ENCODE measurements at regions of chr20 and their contacts with region 1.

Region 1: GRCh38 chr20:10864076-10864918 is 190.5 kb upstream of the JAG1 start:
- DNase-seq: peak; percentile 73
- H3K4me3 Mint-ChIP-seq: peak overlapping the region; percentile 57
- H3K27ac Mint-ChIP-seq: peak overlapping the region; percentile 69
- H3K4me1 Mint-ChIP-seq: peaks cover 53% of the 10 kb centered on the region
- H3K27me3 Mint-ChIP-seq: no peaks in the 10 kb centered on the region
- CTCF ChIP-seq: no peak

Region 2: DNA sequence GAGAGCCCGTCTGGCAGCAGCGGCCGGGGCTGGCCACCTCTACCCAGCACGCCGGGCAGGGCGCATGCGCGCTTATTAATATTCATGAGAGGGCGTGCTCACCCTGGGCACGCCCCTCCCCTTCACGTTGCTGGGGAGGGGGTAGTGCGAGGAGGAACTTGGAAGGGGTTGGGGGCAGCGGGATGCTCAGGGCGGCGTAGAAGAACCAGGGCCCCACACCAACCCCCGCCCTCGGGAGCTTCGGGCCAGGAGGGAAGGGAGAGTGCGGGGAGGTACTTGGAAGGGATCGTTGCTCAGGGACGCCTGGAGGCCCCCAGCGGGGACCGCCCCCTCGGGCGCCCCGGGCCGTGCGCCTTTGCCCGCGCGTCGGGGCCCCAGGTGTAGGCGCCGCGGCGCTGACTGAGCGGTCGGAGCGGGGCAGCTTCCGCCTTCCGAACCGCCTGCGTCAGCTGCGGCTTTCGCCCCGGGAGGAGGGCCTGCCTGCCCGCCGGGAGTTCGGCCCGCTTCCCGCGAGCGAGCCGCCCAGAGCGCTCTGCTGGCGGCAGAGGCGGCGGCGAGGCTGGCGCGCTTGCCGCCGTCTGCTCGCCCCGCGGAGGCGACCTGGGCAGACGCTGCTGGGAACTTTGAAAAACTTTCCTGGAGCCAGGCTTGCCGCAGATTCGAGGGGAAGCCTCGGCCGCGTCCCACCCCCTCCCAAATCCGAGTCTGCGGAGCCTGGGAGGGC is 190.1 kb before region 1 on chr20 and contains the start of gene JAG1:
- CTCF ChIA-PET with region 1: no interaction called
- intact Hi-C with region 1: loop called (anchors 2 kb)
- DNase-seq: peak; percentile 95
- H3K4me3 Mint-ChIP-seq: peak within 1 kb of the TSS; percentile 82
- H3K27ac Mint-ChIP-seq: peak within 1 kb of the TSS; percentile 93
- H3K4me1 Mint-ChIP-seq: peaks cover 19% of the 10 kb centered on the region
- H3K27me3 Mint-ChIP-seq: no peaks in the 10 kb centered on the region
- CTCF ChIP-seq: no peak
- total RNA-seq, gene JAG1: 156 and 245 TPM in 2 replicates

Region 3: DNA sequence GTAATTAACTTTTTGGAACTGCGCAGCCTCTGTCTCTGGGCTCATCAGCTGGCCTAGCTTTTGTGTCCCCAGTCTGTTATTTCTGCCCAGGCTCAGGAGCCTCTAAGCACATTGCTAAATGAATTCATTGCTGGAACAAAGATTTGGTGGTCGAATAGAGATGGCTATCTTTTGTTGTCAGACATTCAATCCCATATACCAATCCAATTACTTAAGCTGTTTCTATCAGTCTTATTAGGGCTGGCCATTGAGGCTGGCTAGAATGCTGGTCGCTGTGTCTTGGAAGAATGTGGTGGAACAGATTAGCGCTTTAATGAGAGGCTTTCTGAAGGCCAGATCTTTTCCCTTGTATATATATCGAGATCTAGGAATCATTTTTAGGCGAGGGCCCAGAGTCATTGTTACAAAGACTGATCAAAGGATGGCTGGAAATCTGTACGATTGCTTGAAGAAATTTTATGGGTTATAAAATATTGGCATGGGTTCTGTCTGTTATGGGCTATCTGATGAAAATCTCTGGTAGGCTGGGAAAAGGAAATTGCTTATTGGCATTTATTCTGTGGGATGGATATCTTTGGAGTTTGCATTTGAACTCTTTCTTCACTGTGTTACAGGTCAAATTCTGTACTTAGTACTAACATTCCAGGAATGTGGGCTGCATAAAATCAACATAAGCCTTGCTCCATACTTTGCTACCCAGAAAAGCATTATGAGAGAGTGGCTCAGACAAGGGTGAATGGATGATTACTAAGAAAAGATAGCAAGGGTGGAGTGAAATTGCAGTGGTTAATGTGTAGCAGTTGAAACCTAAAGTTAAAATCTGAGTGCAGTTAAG is 155.7 kb before region 1 on chr20:
- CTCF ChIA-PET with region 1: no interaction called
- intact Hi-C with region 1: loop called (anchors 2 kb)
- DNase-seq: no peak
- H3K4me3 Mint-ChIP-seq: peak overlapping the region; percentile 43
- H3K27ac Mint-ChIP-seq: peak overlapping the region; percentile 96
- H3K4me1 Mint-ChIP-seq: peaks cover 53% of the 10 kb centered on the region
- H3K27me3 Mint-ChIP-seq: no peaks in the 10 kb centered on the region
- CTCF ChIP-seq: no peak

Region 4: GRCh38 chr20:10940941-10941340 is 76.6 kb after region 1 on chr20:
- CTCF ChIA-PET with region 1: no interaction called
- intact Hi-C with region 1: loop called (anchors 1 kb)
- DNase-seq: no peak
- H3K4me3 Mint-ChIP-seq: no peak overlapping the region
- H3K27ac Mint-ChIP-seq: no peak overlapping the region
- H3K4me1 Mint-ChIP-seq: peaks cover 8% of the 10 kb centered on the region
- H3K27me3 Mint-ChIP-seq: no peaks in the 10 kb centered on the region
- CTCF ChIP-seq: no peak

Region 5: DNA sequence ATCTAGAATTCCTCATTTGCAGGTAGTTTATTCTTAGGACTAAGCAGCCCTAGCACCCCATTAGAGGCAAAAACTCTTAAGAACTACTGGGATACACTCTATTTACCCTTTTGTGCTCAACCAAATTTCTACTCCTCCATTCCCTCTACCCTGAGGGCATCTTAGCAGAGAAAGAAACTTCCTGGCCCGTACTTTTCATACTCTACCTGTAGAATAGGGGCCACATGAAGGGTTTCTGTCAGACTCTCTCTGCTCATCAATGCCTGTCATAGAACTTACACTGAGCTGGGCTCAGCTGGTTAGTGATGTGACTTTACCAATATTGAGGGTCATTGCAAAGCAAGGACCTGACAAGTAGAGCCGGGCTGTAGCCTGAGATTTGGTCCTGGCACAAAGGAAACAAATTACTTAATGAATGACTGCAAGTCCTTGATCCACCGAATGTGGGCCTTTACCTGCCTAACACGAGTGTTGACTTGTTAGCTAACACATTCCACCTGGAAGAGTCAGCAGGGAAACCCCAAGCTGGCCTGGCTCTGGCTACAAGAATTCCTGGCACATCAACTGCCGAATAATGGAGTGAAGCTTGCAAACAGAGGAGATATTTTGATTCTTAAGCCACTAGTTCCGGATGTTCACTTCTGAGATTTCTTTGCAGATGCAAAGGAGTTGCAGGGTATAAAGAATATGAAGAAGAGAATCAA is 90.0 kb after region 1 on chr20:
- CTCF ChIA-PET with region 1: no interaction called
- intact Hi-C with region 1: loop called (anchors 2 kb)
- DNase-seq: peak; percentile 53
- H3K4me3 Mint-ChIP-seq: no peak overlapping the region
- H3K27ac Mint-ChIP-seq: no peak overlapping the region
- H3K4me1 Mint-ChIP-seq: peaks cover 28% of the 10 kb centered on the region
- H3K27me3 Mint-ChIP-seq: no peaks in the 10 kb centered on the region
- CTCF ChIP-seq: no peak

Region 6: DNA sequence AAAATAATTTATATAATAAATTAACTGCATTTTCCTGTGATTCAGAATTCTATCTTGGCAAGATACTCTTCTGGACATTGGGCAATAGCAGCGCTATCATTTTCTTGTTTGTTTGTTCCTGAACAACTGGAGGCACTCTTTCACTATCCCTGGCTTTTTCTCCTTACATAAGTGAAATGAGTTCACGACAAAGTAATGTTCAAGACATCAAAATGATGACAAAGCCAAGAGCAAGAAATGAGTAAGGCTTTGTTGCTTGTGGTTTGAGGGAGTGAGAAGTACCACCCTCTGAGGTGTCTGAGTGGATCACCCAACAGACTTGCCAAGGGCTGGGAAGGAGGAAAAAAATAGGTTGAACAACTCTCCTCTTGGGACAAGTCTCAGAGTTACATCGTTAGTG is 276.1 kb after region 1 on chr20:
- CTCF ChIA-PET with region 1: no interaction called
- intact Hi-C with region 1: no loop called
- DNase-seq: no peak
- H3K4me3 Mint-ChIP-seq: no peak overlapping the region
- H3K27ac Mint-ChIP-seq: no peak overlapping the region
- H3K4me1 Mint-ChIP-seq: peaks cover 16% of the 10 kb centered on the region
- H3K27me3 Mint-ChIP-seq: no peaks in the 10 kb centered on the region
- CTCF ChIP-seq: no peak

Region 7: DNA sequence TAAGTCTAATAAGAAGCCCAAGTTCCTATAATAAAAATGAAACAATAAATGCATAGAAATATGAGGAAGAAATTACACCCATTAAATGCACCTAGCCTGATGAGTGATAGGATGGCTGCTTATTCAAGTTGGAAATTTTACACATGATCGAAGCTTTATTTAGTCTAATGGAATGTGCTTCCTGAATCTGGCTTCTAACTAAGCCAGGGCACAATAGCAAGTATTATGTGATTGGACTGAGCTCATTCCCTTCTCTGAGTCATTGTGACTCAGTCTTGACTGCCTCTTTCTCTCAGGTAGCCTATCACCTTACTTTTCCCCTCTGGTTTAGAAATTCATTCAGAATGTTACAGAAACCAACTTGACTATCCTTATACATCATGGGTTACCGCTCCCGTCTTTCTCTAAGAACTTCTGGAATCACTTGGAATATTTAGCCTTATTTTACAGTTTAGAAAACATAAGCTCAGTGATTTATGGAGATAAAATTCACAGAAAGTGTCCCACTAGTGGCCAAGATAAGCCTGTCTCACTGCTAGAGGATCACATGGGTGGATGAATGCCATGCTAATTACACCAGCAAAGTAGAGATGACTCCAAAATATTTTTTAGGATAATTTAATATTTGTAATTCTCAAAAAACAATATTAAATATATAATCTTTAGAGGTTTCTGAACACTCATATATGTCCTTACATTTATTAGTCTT is 314.8 kb after region 1 on chr20:
- CTCF ChIA-PET with region 1: no interaction called
- intact Hi-C with region 1: loop called (anchors 10 kb)
- DNase-seq: peak; percentile 38
- H3K4me3 Mint-ChIP-seq: peak overlapping the region; percentile 13
- H3K27ac Mint-ChIP-seq: peak overlapping the region; percentile 93
- H3K4me1 Mint-ChIP-seq: peaks cover 17% of the 10 kb centered on the region
- H3K27me3 Mint-ChIP-seq: no peaks in the 10 kb centered on the region
- CTCF ChIP-seq: no peak

Region 8: DNA sequence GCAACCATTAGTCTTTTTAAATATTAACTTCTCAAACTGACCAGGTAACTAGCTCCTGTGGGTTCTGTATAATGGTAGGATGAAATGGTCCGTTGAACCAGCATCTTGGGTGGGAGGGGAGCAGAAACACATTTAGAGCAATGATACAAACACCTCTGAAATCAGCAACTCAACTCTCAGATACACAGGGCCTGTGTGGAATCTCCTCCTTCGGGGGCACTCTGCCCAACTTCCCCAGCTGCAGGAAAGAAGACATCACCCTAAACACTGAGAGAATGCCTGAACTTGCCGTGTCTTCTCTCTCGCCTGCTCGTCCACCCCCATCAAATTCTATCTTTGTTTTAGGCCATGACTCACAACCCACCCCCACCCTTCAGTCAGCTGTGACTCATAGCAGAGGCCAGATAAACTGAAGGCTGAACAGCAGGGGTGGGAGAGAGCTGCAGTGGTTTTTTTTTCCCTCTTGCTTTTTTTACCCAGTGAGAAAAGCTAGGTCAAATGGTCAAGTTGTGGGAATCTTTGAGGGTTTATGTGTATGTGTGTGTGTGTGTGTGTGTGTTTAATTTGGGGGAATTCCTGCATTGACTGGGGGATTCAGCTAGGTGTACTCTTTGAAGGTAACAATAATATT is 402.9 kb after region 1 on chr20:
- CTCF ChIA-PET with region 1: no interaction called
- intact Hi-C with region 1: loop called (anchors 2 kb)
- DNase-seq: peak; percentile 52
- H3K4me3 Mint-ChIP-seq: peak overlapping the region; percentile 31
- H3K27ac Mint-ChIP-seq: peak overlapping the region; percentile 59
- H3K4me1 Mint-ChIP-seq: peaks cover 61% of the 10 kb centered on the region
- H3K27me3 Mint-ChIP-seq: no peaks in the 10 kb centered on the region
- CTCF ChIP-seq: no peak